B cell (primary cell): ENCODE measurements at regions of chr12 and their contacts with region 1.

Region 1: GRCh38 chr12:56117778-56118687 is at the start of gene ZC3H10:
- DNase-seq: peak; percentile 99
- ATAC-seq: peak; percentile 76
- H3K4me3 ChIP-seq: peak within 1 kb of the TSS; percentile 66 to 99 (median 97)
- H3K4me3 Mint-ChIP-seq: peak within 1 kb of the TSS; percentile 99
- H3K27ac ChIP-seq: peak within 1 kb of the TSS; percentile 94 to 95
- H3K27ac Mint-ChIP-seq: peak within 1 kb of the TSS; percentile 99
- H3K4me1 ChIP-seq: peaks cover 17 to 30% of the 10 kb centered on the region in 2 donors
- H3K4me1 Mint-ChIP-seq: peaks cover 36% of the 10 kb centered on the region
- H3K27me3 ChIP-seq: no peaks in the 10 kb centered on the region
- H3K27me3 Mint-ChIP-seq: no peaks in the 10 kb centered on the region
- CTCF ChIP-seq: peak; percentile 61
- total RNA-seq, gene ZC3H10: 21.7 and 25.5 TPM in 2 replicates

Region 2: GRCh38 chr12:55829967-55830600 is 287.9 kb before region 1 on chr12:
- CTCF ChIA-PET with region 1: no interaction called
- POLR2A ChIA-PET with region 1: interaction called, 3 read pairs
- intact Hi-C with region 1: loop called (anchors 5 kb)
- DNase-seq: peak; percentile 65
- ATAC-seq: peak; percentile 4
- H3K4me3 ChIP-seq: peak overlapping the region; percentile 68 to 96 (median 84)
- H3K4me3 Mint-ChIP-seq: peak overlapping the region; percentile 99
- H3K27ac ChIP-seq: peak overlapping the region; percentile 57 to 60
- H3K27ac Mint-ChIP-seq: peak overlapping the region; percentile 97
- H3K4me1 ChIP-seq: peaks cover 36 to 49% of the 10 kb centered on the region in 2 donors
- H3K4me1 Mint-ChIP-seq: peaks cover 48% of the 10 kb centered on the region
- H3K27me3 ChIP-seq: no peaks in the 10 kb centered on the region
- H3K27me3 Mint-ChIP-seq: no peaks in the 10 kb centered on the region
- CTCF ChIP-seq: no peak

Region 3: GRCh38 chr12:56078990-56079664 is 38.9 kb before region 1 on chr12:
- CTCF ChIA-PET with region 1: interaction called, 3 read pairs
- POLR2A ChIA-PET with region 1: no interaction called
- intact Hi-C with region 1: loop called (anchors 1 kb)
- DNase-seq: peak; percentile 65
- ATAC-seq: peak; percentile 77
- H3K4me3 ChIP-seq: peak overlapping the region; percentile 53 to 91 (median 70)
- H3K4me3 Mint-ChIP-seq: peak overlapping the region; percentile 91
- H3K27ac ChIP-seq: no peak overlapping the region
- H3K27ac Mint-ChIP-seq: no peak overlapping the region
- H3K4me1 ChIP-seq: peaks cover 18 to 22% of the 10 kb centered on the region in 2 donors
- H3K4me1 Mint-ChIP-seq: peaks cover 12% of the 10 kb centered on the region
- H3K27me3 ChIP-seq: peaks cover 0 to 46% (median 15%) of the 10 kb centered on the region in 4 experiments
- H3K27me3 Mint-ChIP-seq: peaks cover 15% of the 10 kb centered on the region
- CTCF ChIP-seq: peak; percentile 80

Region 4: GRCh38 chr12:56189176-56189917 is 71.3 kb after region 1 on chr12 and contains the start of gene SMARCC2:
- CTCF ChIA-PET with region 1: interaction called, 247 read pairs
- POLR2A ChIA-PET with region 1: interaction called, 27 read pairs
- intact Hi-C with region 1: loop called (anchors 1 kb)
- DNase-seq: peak; percentile 91
- ATAC-seq: peak; percentile 87
- H3K4me3 ChIP-seq: peak within 1 kb of the TSS; percentile 61 to 89 (median 85)
- H3K4me3 Mint-ChIP-seq: peak within 1 kb of the TSS; percentile 98
- H3K27ac ChIP-seq: peak within 1 kb of the TSS; percentile 75 to 86
- H3K27ac Mint-ChIP-seq: peak within 1 kb of the TSS; percentile 97
- H3K4me1 ChIP-seq: peaks cover 19 to 34% of the 10 kb centered on the region in 2 donors
- H3K4me1 Mint-ChIP-seq: peaks cover 48% of the 10 kb centered on the region
- H3K27me3 ChIP-seq: no peaks in the 10 kb centered on the region
- H3K27me3 Mint-ChIP-seq: no peaks in the 10 kb centered on the region
- CTCF ChIP-seq: peak; percentile 72
- total RNA-seq, gene SMARCC2: 195 and 198 TPM in 2 replicates

Region 5: DNA sequence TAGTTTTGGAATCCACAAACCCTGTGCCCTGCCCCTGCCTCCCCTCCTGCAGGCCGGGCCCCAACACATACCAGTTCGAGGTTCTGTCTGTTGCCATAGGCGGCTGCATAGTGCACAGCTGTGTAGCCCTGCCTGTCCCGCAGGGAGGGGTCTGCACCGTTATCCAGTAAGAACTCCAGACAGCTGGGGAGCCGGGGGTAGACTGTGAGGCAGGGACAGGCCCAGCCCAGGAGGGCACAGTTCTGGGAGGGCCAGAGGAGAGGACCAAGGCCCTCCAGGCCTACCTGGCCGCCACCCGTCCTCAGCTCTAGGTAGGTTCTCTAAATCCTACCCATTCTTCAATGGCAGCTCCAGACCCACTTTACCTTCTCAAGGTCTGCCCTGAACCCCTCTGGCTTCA is 130.7 kb after region 1 on chr12:
- CTCF ChIA-PET with region 1: no interaction called
- POLR2A ChIA-PET with region 1: no interaction called
- intact Hi-C with region 1: no loop called
- DNase-seq: no peak
- ATAC-seq: no peak
- H3K4me3 ChIP-seq: no peak overlapping the region
- H3K4me3 Mint-ChIP-seq: no peak overlapping the region
- H3K27ac ChIP-seq: no peak overlapping the region
- H3K27ac Mint-ChIP-seq: no peak overlapping the region
- H3K4me1 ChIP-seq: no peaks in the 10 kb centered on the region
- H3K4me1 Mint-ChIP-seq: no peaks in the 10 kb centered on the region
- H3K27me3 ChIP-seq: no peaks in the 10 kb centered on the region
- H3K27me3 Mint-ChIP-seq: no peaks in the 10 kb centered on the region
- CTCF ChIP-seq: no peak

Region 6: DNA sequence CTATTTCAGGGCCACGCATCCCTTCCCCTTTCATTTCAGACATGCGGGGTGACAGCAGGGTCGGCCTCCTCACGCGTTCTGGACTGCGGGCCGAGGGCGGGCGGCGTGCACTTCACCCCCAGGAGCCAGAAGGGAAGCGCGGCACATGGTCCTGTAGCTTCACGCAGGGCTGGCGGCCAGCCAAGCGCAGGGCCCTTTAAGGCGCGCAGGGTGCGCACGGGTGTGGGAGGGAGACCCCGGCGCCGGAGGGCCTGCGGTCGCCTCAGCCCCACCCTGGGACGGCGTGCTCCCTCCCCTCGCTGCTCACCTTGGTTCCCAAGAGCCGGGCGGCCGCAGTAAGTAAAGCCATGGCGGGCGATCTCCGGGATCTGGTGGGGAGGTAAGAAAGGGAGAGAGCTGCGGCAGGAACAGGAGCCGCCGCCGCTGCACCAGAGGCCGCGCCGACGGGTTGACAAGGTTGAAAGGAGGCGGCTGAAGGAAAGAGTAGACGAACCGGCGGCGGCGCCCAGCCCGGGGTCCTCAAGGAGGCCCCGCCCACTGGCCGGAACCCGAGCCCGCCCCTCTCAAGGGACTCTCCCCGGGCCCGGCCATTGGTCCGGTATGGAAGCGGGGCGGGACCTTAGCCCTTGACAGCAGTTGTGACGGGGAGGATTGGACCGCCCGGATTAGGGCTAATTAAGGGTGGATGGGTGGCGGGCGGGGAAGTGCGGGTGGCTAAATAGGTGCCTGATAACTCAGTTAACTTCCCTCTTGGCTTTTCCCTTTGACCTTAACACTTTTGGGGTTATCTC is 182.0 kb after region 1 on chr12 and contains the start of gene CS:
- CTCF ChIA-PET with region 1: interaction called, 9 read pairs
- POLR2A ChIA-PET with region 1: no interaction called
- intact Hi-C with region 1: loop called (anchors 1 kb)
- DNase-seq: peak; percentile 98
- ATAC-seq: peak; percentile 96
- H3K4me3 ChIP-seq: peak within 1 kb of the TSS; percentile 78 to 91 (median 83)
- H3K4me3 Mint-ChIP-seq: peak within 1 kb of the TSS; percentile 98
- H3K27ac ChIP-seq: peak within 1 kb of the TSS; percentile 92 to 95
- H3K27ac Mint-ChIP-seq: peak within 1 kb of the TSS; percentile 97
- H3K4me1 ChIP-seq: peaks cover 51 to 61% of the 10 kb centered on the region in 2 donors
- H3K4me1 Mint-ChIP-seq: peaks cover 57% of the 10 kb centered on the region
- H3K27me3 ChIP-seq: no peaks in the 10 kb centered on the region
- H3K27me3 Mint-ChIP-seq: no peaks in the 10 kb centered on the region
- CTCF ChIP-seq: no peak
- total RNA-seq, gene CS: 151 and 154 TPM in 2 replicates

Region 7: GRCh38 chr12:56636675-56637540 is 518.9 kb after region 1 on chr12:
- CTCF ChIA-PET with region 1: no interaction called
- POLR2A ChIA-PET with region 1: interaction called, 3 read pairs
- intact Hi-C with region 1: loop called (anchors 5 kb)
- DNase-seq: peak; percentile 98
- ATAC-seq: peak; percentile 69
- H3K4me3 ChIP-seq: peak overlapping the region; percentile 57 to 85 (median 78)
- H3K4me3 Mint-ChIP-seq: peak overlapping the region; percentile 89
- H3K27ac ChIP-seq: peak overlapping the region; percentile 75 to 83
- H3K27ac Mint-ChIP-seq: peak overlapping the region; percentile 95
- H3K4me1 ChIP-seq: peaks cover 46 to 53% of the 10 kb centered on the region in 2 donors
- H3K4me1 Mint-ChIP-seq: peaks cover 59% of the 10 kb centered on the region
- H3K27me3 ChIP-seq: no peaks in the 10 kb centered on the region
- H3K27me3 Mint-ChIP-seq: no peaks in the 10 kb centered on the region
- CTCF ChIP-seq: peak; percentile 70